ENCODE measurements at regions of chr15 and their contacts with region 1.

Region 1: GRCh38 chr15:39580117-39580484 is 778 bp upstream of the THBS1 start:
- DNase-seq: peak; percentile 94 to 98 (median 97)
- H3K4me3 ChIP-seq: peak overlapping the region; percentile 92
- H3K27ac ChIP-seq: peak overlapping the region; percentile 68 to 93
- H3K4me1 ChIP-seq: peaks cover 15% of the 10 kb centered on the region
- H3K27me3 ChIP-seq: no peaks in the 10 kb centered on the region
- CTCF ChIP-seq: peak; percentile 96 to 99 (median 98)
- EP300 ChIP-seq: no peak
- POLR2A ChIP-seq: no peak

Region 2: GRCh38 chr15:38817427-38818156 is 762.5 kb before region 1 on chr15:
- intact Hi-C with region 1: loop called (anchors 2 to 10 kb)
- DNase-seq: peak; percentile 79 to 91 (median 89)
- H3K4me3 ChIP-seq: no peak overlapping the region
- H3K27ac ChIP-seq: no peak overlapping the region
- H3K4me1 ChIP-seq: peaks cover 2% of the 10 kb centered on the region
- H3K27me3 ChIP-seq: no peaks in the 10 kb centered on the region
- CTCF ChIP-seq: peak; percentile 97 to 99 (median 98)
- EP300 ChIP-seq: no peak
- POLR2A ChIP-seq: no peak

Region 3: DNA sequence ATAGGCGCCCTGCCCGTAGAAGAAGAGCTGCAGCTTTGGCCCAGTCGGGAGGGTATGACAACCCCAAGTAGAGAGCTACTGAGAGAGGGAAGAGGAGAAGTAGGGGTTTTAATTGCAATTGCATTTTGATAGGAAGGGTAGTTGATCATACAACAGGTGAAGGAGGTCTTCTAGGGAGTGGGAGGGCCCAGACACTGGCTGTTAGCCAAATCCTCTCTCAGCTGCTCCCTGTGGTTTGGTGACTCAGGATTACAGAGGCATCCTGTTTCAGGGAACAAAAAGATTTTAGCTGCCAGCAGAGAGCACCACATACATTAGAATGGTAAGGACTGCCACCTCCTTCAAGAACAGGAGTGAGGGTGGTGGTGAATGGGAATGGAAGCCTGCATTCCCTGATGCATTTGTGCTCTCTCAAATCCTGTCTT is 408.1 kb before region 1 on chr15:
- intact Hi-C with region 1: loop called (anchors 2 to 10 kb)
- DNase-seq: peak; percentile 56 to 78 (median 67)
- H3K4me3 ChIP-seq: no peak overlapping the region
- H3K27ac ChIP-seq: peak overlapping the region in 1 of 2 donors; percentile 27
- H3K4me1 ChIP-seq: peaks cover 11% of the 10 kb centered on the region
- H3K27me3 ChIP-seq: no peaks in the 10 kb centered on the region
- CTCF ChIP-seq: peak in 2 of 3 donors; percentile 32 to 40
- EP300 ChIP-seq: no peak
- POLR2A ChIP-seq: no peak

Region 4: GRCh38 chr15:39495871-39496840 is 83.9 kb before region 1 on chr15:
- intact Hi-C with region 1: loop called in 1 of 4 experiments (anchors 10 kb)
- DNase-seq: peak in 3 of 5 donors; percentile 33 to 49 (median 40)
- H3K4me3 ChIP-seq: no peak overlapping the region
- H3K27ac ChIP-seq: peak overlapping the region in 1 of 2 donors; percentile 32
- H3K4me1 ChIP-seq: peaks cover 19% of the 10 kb centered on the region
- H3K27me3 ChIP-seq: no peaks in the 10 kb centered on the region
- CTCF ChIP-seq: no peak
- EP300 ChIP-seq: no peak
- POLR2A ChIP-seq: no peak